ENCODE measurements at regions of chr12 and their contacts with region 1.

Region 1: GRCh38 chr12:116142936-116143898 is 134.3 kb downstream of the MED13L start:
- DNase-seq: peak; percentile 79 to 92 (median 87)
- H3K4me3 ChIP-seq: peak overlapping the region in 5 of 7 experiments; percentile 20 to 63 (median 31)
- H3K27ac ChIP-seq: peak overlapping the region; percentile 59 to 84
- H3K4me1 ChIP-seq: peaks cover 25 to 39% (median 32%) of the 10 kb centered on the region in 4 experiments
- H3K27me3 ChIP-seq: no peaks in the 10 kb centered on the region

Region 2: DNA sequence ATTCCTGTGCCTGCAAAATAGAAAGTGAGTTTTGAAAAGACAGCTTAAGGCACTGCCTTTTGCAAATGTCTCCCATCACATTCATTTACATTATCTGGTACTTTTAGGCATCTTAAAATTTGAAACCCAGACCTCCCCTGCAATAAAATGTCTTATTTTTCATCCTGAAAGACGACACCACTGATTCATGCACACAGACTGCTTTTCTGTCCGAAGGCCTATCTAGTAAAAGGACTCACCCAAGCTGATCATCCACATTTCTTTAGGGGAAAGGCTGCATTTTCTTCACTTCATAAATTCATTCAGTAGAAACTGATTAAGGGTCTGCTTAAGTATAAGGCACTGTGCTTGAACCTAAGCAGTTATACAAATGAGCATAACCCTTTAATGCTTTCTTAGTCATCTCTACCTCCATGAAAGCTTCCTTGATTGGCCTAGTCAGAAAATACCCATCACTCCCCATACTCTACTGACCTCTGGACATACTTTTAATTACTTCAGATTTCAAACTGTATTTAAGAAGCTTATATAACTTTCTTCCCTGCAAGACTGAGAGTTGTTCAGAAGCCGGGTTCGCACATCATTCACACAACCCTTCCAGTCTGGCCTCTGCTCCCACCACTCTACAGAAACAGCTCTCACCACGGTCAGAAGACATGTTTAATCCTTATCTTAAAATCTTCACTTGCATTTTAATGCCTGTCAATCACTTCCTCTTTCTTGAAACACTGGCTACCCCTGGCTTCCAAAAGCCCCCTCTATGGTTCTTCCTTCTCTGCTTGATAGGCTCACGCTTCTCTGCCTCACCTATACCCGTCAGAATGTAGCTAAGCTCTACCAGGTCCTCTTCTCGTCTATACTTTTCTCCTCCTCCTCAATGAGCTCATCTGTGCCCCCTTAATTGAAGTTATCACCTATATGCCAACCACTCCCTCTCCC is 154.3 kb before region 1 on chr12:
- CTCF ChIA-PET with region 1: no interaction called
- POLR2A ChIA-PET with region 1: no interaction called
- DNase-seq: peak in 2 of 3 donors; percentile 13 to 14
- H3K4me3 ChIP-seq: no peak overlapping the region
- H3K27ac ChIP-seq: no peak overlapping the region
- H3K4me1 ChIP-seq: peaks cover 0 to 11% (median 0%) of the 10 kb centered on the region in 4 experiments
- H3K27me3 ChIP-seq: no peaks in the 10 kb centered on the region

Region 3: GRCh38 chr12:116106870-116107269 is 36.3 kb before region 1 on chr12:
- CTCF ChIA-PET with region 1: no interaction called
- POLR2A ChIA-PET with region 1: no interaction called
- DNase-seq: no peak
- H3K4me3 ChIP-seq: no peak overlapping the region
- H3K27ac ChIP-seq: no peak overlapping the region
- H3K4me1 ChIP-seq: peaks cover 0 to 2% (median 0%) of the 10 kb centered on the region in 4 experiments
- H3K27me3 ChIP-seq: no peaks in the 10 kb centered on the region

Region 4: DNA sequence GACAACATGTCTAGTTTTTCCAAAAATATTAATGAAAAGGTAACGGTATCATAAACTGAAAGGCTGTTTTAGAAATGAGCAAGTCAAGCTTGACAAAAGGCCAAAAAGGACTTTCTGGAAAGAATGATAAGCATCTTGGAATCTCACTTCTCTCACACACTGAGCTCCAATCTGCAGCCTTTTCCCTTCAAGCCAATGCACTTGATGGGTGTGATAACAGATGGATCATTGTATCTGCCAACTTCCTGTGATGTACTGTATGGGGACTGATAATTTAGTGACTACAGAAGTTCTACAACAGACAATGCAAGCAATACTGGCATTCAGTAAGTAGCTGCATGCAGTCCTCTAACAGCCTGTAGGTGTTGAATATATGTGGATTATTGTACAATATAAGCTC is 12.8 kb before region 1 on chr12:
- CTCF ChIA-PET with region 1: interaction called, 17 read pairs
- POLR2A ChIA-PET with region 1: no interaction called
- DNase-seq: peak in 1 of 3 donors; percentile 40
- H3K4me3 ChIP-seq: peak overlapping the region in 1 of 7 experiments; percentile 10
- H3K27ac ChIP-seq: no peak overlapping the region
- H3K4me1 ChIP-seq: peaks cover 11 to 42% (median 28%) of the 10 kb centered on the region in 4 experiments
- H3K27me3 ChIP-seq: no peaks in the 10 kb centered on the region

Region 5: DNA sequence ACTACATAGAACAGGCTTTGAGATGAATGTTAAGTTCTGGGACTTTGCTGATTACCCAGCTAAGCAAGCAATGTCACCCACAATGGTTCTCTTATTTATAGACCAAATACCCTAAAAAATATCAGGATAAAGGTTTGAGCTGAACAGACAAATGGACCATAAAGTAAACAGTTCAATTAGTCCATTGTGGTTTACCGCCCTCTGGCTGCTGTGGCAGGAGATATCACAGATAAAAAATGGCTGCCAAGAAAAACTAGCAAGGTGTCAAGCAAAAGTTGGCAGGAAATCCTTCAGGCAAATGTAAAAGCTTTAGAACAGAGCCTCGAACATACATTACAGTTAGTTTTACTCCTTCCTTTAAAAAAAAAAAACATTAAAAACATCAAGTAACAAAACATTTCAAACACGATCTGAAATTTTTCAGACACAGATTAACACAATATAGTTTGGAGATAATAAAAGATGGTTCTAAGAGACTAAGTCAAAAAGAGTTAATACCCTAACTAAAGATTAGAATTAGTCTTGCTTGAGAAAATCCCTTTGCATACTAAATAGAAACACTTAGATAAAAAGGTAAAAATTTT is 93.0 kb after region 1 on chr12:
- CTCF ChIA-PET with region 1: interaction called, 40 read pairs
- POLR2A ChIA-PET with region 1: no interaction called
- DNase-seq: peak; percentile 76 to 85 (median 78)
- H3K4me3 ChIP-seq: peak overlapping the region in 2 of 7 experiments; percentile 42 to 47
- H3K27ac ChIP-seq: peak overlapping the region in 1 of 2 experiments; percentile 57
- H3K4me1 ChIP-seq: peaks cover 6 to 20% (median 15%) of the 10 kb centered on the region in 4 experiments
- H3K27me3 ChIP-seq: no peaks in the 10 kb centered on the region

Region 6: GRCh38 chr12:116689979-116690744 is 546.9 kb after region 1 on chr12:
- CTCF ChIA-PET with region 1: interaction called, 11 read pairs
- POLR2A ChIA-PET with region 1: no interaction called
- DNase-seq: peak; percentile 46 to 89 (median 79)
- H3K4me3 ChIP-seq: peak overlapping the region in 1 of 7 experiments; percentile 48
- H3K27ac ChIP-seq: no peak overlapping the region
- H3K4me1 ChIP-seq: peaks cover 11 to 75% (median 65%) of the 10 kb centered on the region in 4 experiments
- H3K27me3 ChIP-seq: no peaks in the 10 kb centered on the region

Region 7: DNA sequence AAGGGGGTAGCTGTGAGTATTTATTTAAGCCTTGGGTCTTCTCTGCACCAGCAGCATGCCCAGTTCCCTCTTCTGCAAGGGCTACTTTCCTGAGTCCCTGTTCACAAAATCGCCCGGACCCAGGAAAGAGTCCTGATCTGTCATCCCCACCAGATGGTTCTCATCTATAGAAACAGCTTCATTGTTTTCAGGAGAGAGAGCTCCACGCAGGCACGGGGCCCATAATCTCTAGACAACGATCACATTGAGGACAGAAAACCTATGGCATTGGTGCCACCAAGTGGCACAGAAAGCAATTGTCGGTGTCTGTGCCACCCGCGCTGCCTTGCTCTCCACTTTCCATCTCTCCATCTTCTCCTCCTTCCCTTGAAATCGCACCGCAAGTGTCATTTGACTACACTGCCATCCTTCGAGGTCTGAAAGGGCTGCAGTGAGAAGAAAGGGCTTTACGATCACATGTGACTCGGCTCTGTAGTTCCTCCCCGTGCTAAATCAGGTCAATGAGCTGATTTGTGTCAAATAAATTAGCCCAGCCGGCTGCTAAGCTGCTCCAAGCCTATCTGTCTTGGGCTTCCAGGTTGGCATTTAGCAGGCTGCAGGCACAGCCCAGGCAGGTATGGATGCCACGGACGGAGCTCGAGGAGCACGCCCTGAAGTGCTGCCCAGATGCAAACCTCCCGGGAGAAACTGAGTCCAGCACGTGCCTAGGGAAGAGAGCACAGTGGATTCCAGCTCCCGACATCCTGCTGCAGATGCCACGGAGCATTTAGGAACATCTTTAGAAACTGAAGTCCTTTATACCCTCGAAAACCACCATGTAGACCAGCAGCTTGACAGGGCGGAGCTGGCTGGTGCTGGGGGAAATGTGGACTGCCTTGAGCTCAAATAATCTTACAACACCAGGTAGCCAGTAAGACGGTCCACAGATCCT is 565.9 kb after region 1 on chr12:
- CTCF ChIA-PET with region 1: interaction called, 10 read pairs
- POLR2A ChIA-PET with region 1: no interaction called
- DNase-seq: peak; percentile 54 to 76 (median 72)
- H3K4me3 ChIP-seq: peak overlapping the region in 2 of 7 experiments; percentile 22 to 65
- H3K27ac ChIP-seq: no peak overlapping the region
- H3K4me1 ChIP-seq: peaks cover 2 to 23% (median 16%) of the 10 kb centered on the region in 4 experiments
- H3K27me3 ChIP-seq: peaks cover 0 to 18% (median 5%) of the 10 kb centered on the region in 5 experiments